Colonic mucosa (tissue), 4 donors: ENCODE measurements at regions of chr2 and their contacts with region 1.

Region 1: DNA sequence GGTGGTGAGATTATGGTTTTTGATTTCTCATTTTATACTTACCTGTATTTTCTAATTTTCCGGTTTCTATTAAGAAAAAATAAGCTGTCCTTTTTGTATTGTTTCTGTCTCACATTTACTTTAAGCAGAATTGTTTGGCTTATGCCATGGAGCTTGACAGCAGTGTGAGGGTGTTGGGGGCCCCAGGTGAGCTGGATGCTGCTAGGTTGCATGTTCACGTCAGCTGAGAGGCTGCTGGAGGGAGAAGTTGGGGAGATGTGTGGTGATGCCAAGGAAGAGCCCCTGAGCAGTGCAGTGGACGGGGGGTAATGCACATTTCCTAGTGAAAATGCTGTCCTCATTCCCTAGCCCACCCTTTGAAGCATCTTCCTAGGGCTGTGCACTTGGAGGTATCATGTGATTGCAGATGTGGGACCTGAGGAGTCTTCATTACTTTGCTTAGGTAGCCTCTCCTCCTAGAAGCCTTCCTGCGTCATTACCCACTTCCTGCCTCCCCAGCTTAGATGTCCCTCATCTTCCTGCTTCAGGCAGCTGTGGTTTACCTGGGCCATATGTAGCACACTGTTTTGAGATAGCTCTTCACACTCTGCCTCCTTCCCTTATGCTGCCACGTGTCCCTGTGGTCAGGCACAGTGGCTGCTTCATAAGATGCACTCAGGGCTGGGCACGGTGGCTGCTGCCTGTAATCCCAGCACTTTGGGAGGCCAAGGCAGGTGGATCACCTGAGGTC is 16.2 kb downstream of the ATG16L1 start:
- DNase-seq: peak; percentile 34
- H3K4me3 ChIP-seq: no peak overlapping the region
- H3K27ac ChIP-seq: peak overlapping the region; percentile 18
- H3K4me1 ChIP-seq: no peaks in the 10 kb centered on the region
- H3K27me3 ChIP-seq: no peaks in the 10 kb centered on the region
- CTCF ChIP-seq: no peak

Region 2: DNA sequence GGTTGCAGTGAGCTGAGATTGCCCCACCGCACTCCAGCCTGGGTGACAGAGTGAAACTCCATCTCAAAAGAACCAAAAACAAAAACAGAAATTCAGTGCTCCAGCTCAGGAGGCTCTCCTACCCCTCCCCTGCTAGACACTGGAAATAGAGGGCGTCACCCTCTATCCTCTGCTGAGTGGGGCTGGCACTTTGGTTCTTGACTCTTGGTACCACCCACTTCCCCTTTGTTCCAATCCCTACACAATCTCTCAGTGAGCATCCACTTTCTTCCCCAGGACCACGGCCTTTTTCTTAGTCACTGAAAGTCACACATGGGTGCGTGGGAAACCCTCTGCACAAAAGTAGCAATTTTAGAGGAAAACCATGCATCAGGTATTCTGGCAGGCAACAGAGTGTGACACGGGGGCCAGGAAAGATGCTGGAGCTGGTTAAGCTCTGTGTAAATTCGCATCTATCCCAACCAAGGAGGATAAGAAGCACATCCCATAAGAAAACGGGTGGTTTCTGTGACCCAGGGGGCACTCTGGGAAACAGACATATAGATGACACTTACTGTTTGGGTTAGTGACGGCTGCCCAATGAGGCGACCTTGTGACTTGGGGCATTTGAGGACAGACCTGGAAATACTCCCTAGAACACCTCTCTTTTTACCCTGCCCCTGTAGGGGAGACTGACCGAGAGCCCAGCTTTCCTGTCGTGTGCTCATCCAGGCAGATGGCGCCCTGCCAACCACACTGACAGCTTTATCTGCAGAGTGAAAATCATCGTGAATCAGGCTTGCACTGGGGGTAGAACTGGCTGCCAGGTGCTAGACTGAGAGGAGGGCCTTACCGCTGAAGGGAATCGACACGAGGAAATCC is 578.9 kb after region 1 on chr2:
- intact Hi-C with region 1: loop called (anchors 10 kb)
- DNase-seq: no peak
- H3K4me3 ChIP-seq: no peak overlapping the region
- H3K27ac ChIP-seq: no peak overlapping the region
- H3K4me1 ChIP-seq: no peaks in the 10 kb centered on the region
- H3K27me3 ChIP-seq: no peaks in the 10 kb centered on the region
- CTCF ChIP-seq: no peak